ENCODE measurements at regions of chr17 and their contacts with region 1.

Region 1: GRCh38 chr17:4215882-4216570 is 47.8 kb downstream of the ANKFY1 start:
- DNase-seq: no peak
- ATAC-seq: no peak
- H3K4me3 ChIP-seq: no peak overlapping the region
- H3K27ac ChIP-seq: no peak overlapping the region
- H3K4me1 ChIP-seq: no peaks in the 10 kb centered on the region
- H3K27me3 ChIP-seq: no peaks in the 10 kb centered on the region
- CTCF ChIP-seq: no peak
- POLR2A ChIP-seq: no peak
- RAD21 ChIP-seq: no peak

Region 2: GRCh38 chr17:4229627-4230541 is 13.9 kb after region 1 on chr17:
- CTCF ChIA-PET with region 1: interaction called, 14 read pairs
- POLR2A ChIA-PET with region 1: no interaction called
- RAD21 ChIA-PET with region 1: no interaction called
- intact Hi-C with region 1: no loop called
- DNase-seq: peak; percentile 31
- ATAC-seq: peak; percentile 97
- H3K4me3 ChIP-seq: no peak overlapping the region
- H3K27ac ChIP-seq: peak overlapping the region; percentile 36; the same call in 1 of the 2 replicates
- H3K4me1 ChIP-seq: peaks cover 16 to 21% of the 10 kb centered on the region in 2 experiments
- H3K27me3 ChIP-seq: no peaks in the 10 kb centered on the region
- CTCF ChIP-seq: no peak
- POLR2A ChIP-seq: no peak
- RAD21 ChIP-seq: no peak

Region 3: GRCh38 chr17:4304417-4305027 is 88.5 kb after region 1 on chr17:
- CTCF ChIA-PET with region 1: interaction called, 15 read pairs
- POLR2A ChIA-PET with region 1: no interaction called
- RAD21 ChIA-PET with region 1: interaction called in 1 of 2 experiments, 3 read pairs
- intact Hi-C with region 1: loop called (anchors 2 kb)
- DNase-seq: peak; percentile 18
- ATAC-seq: peak; percentile 85
- H3K4me3 ChIP-seq: no peak overlapping the region
- H3K27ac ChIP-seq: no peak overlapping the region
- H3K4me1 ChIP-seq: no peaks in the 10 kb centered on the region
- H3K27me3 ChIP-seq: no peaks in the 10 kb centered on the region
- CTCF ChIP-seq: peak; percentile 30 to 79 (median 78); a peak in 5 of 6 replicates
- POLR2A ChIP-seq: no peak
- RAD21 ChIP-seq: peak; percentile 38

Region 4: DNA sequence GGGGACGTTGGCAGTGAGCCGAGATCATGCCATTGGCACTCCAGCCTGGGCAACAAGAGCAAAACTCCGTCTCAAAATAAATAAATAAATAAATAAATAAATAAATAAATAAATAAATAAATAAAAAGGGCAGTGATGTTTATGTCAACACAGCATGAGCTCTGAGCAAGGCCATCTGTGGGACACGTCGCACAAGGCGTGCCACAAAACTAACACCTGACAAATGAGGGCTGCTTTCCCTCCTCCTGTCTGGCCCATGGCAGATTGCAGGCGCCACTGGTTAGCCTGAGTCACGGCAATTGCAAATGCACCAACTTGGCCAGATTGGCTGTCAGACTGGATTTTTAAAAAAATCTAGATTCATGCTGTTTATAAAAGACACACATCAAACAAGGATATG is 191.8 kb after region 1 on chr17:
- CTCF ChIA-PET with region 1: interaction called, 43 read pairs
- POLR2A ChIA-PET with region 1: no interaction called
- RAD21 ChIA-PET with region 1: interaction called, 4 to 13 read pairs
- intact Hi-C with region 1: loop called (anchors 1 kb)
- DNase-seq: no peak
- ATAC-seq: no peak
- H3K4me3 ChIP-seq: no peak overlapping the region
- H3K27ac ChIP-seq: no peak overlapping the region
- H3K4me1 ChIP-seq: peaks cover 0 to 1% of the 10 kb centered on the region in 2 experiments; a peak in 1 of 4 replicates
- H3K27me3 ChIP-seq: no peaks in the 10 kb centered on the region
- CTCF ChIP-seq: no peak
- POLR2A ChIP-seq: no peak
- RAD21 ChIP-seq: no peak

Region 5: DNA sequence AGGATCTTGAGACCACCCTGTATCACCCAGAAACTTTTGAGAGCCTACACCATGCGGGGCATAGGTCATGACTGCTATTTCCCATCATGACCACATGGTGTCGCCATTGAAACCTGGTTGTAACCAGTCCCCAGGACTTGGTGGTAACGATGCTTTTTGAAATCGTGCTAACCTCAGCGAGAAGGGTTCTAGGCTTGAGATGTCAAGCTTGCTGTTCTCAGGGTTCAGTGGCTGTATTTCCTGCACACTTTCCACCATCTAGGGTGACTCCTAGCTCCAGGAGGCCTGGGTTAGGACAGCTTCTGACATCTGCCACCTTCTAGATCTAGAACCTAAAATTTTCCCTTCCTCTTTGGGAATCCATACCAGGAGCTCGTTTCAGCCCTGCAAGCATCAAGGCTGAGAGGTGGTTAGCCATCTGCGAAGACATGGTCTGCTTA is 204.7 kb after region 1 on chr17:
- CTCF ChIA-PET with region 1: interaction called, 10 read pairs
- POLR2A ChIA-PET with region 1: no interaction called
- RAD21 ChIA-PET with region 1: interaction called in 1 of 2 experiments, 3 read pairs
- intact Hi-C with region 1: no loop called
- DNase-seq: peak; percentile 71
- ATAC-seq: peak; percentile 96
- H3K4me3 ChIP-seq: no peak overlapping the region
- H3K27ac ChIP-seq: no peak overlapping the region
- H3K4me1 ChIP-seq: peaks cover 3 to 6% of the 10 kb centered on the region in 2 experiments; a peak in 2 of 4 replicates
- H3K27me3 ChIP-seq: no peaks in the 10 kb centered on the region
- CTCF ChIP-seq: peak; percentile 83 to 87 (median 85)
- POLR2A ChIP-seq: no peak
- RAD21 ChIP-seq: peak; percentile 95

Measured in HCT116 (cell line).